Breast epithelium (tissue), 4 donors: ENCODE measurements at regions of chr11 and their contacts with region 1.

Region 1: GRCh38 chr11:64947208-64947814 is 11.6 kb upstream of the GPHA2 start:
- DNase-seq: no peak
- H3K4me3 ChIP-seq: no peak overlapping the region
- H3K27ac ChIP-seq: no peak overlapping the region
- H3K4me1 ChIP-seq: no peaks in the 10 kb centered on the region
- H3K27me3 ChIP-seq: no peaks in the 10 kb centered on the region
- CTCF ChIP-seq: no peak
- POLR2A ChIP-seq: no peak

Region 2: GRCh38 chr11:64894070-64894796 is 53.1 kb before region 1 on chr11:
- intact Hi-C with region 1: no loop called
- DNase-seq: peak; percentile 62 to 82
- H3K4me3 ChIP-seq: no peak overlapping the region
- H3K27ac ChIP-seq: no peak overlapping the region
- H3K4me1 ChIP-seq: no peaks in the 10 kb centered on the region
- H3K27me3 ChIP-seq: no peaks in the 10 kb centered on the region
- CTCF ChIP-seq: peak; percentile 64 to 86 (median 83)
- POLR2A ChIP-seq: no peak

Region 3: GRCh38 chr11:64996710-64997380 is 49.5 kb after region 1 on chr11 and contains the start of gene BATF2:
- intact Hi-C with region 1: loop called (anchors 10 kb)
- DNase-seq: peak; percentile 57
- H3K4me3 ChIP-seq: peak within 1 kb of the TSS; percentile 17 to 65 (median 47)
- H3K27ac ChIP-seq: peak within 1 kb of the TSS; percentile 64 to 73
- H3K4me1 ChIP-seq: no peaks in the 10 kb centered on the region
- H3K27me3 ChIP-seq: no peaks in the 10 kb centered on the region
- CTCF ChIP-seq: peak; percentile 11 to 52 (median 26)
- POLR2A ChIP-seq: no peak
- total RNA-seq, gene BATF2: 0.33 to 1.5 (median 0.64) TPM